Naive thymus-derived CD4-positive, alpha-beta T cell (primary cell): ENCODE measurements at regions of chr1 and their contacts with region 1.

Region 1: GRCh38 chr1:150621497-150622302 is 7.7 kb downstream of the ENSA start:
- DNase-seq: peak in 7 of 9 donors; percentile 53 to 74 (median 65)
- ATAC-seq: peak; percentile 78
- H3K4me3 ChIP-seq: no peak overlapping the region
- H3K4me3 Mint-ChIP-seq: peak overlapping the region in 8 of 10 donors; percentile 16 to 64 (median 46)
- H3K27ac ChIP-seq: peak overlapping the region; percentile 49
- H3K27ac Mint-ChIP-seq: peak overlapping the region; percentile 48 to 91 (median 83)
- H3K4me1 ChIP-seq: peaks cover 5 to 32% of the 10 kb centered on the region in 2 donors
- H3K4me1 Mint-ChIP-seq: peaks cover 17 to 65% (median 51%) of the 10 kb centered on the region in 7 donors
- H3K27me3 ChIP-seq: no peaks in the 10 kb centered on the region
- H3K27me3 Mint-ChIP-seq: no peaks in the 10 kb centered on the region

Region 2: GRCh38 chr1:150572918-150573647 is 48.6 kb before region 1 on chr1:
- CTCF ChIA-PET with region 1: interaction called, 272 read pairs
- POLR2A ChIA-PET with region 1: interaction called, 254 read pairs
- intact Hi-C with region 1: loop called in 1 of 2 experiments (anchors 1 kb)
- DNase-seq: no peak
- ATAC-seq: peak; percentile 1
- H3K4me3 ChIP-seq: peak overlapping the region; percentile 56
- H3K4me3 Mint-ChIP-seq: peak overlapping the region; percentile 88 to 99 (median 94)
- H3K27ac ChIP-seq: peak overlapping the region; percentile 97
- H3K27ac Mint-ChIP-seq: peak overlapping the region; percentile 81 to 99 (median 97)
- H3K4me1 ChIP-seq: peaks cover 58 to 72% of the 10 kb centered on the region in 2 donors
- H3K4me1 Mint-ChIP-seq: peaks cover 40 to 75% (median 59%) of the 10 kb centered on the region in 7 donors
- H3K27me3 ChIP-seq: no peaks in the 10 kb centered on the region
- H3K27me3 Mint-ChIP-seq: peaks cover 0 to 5% (median 0%) of the 10 kb centered on the region in 5 donors

Region 3: GRCh38 chr1:150578965-150579798 is 42.5 kb before region 1 on chr1 and contains the start of gene MCL1:
- CTCF ChIA-PET with region 1: interaction called, 5 read pairs
- POLR2A ChIA-PET with region 1: interaction called, 92 read pairs
- intact Hi-C with region 1: loop called (anchors 1 to 2 kb)
- DNase-seq: peak; percentile 75 to 88 (median 83)
- ATAC-seq: peak; percentile 90
- H3K4me3 ChIP-seq: peak within 1 kb of the TSS; percentile 95
- H3K4me3 Mint-ChIP-seq: peak within 1 kb of the TSS; percentile 92 to 99 (median 95)
- H3K27ac ChIP-seq: peak within 1 kb of the TSS; percentile 97
- H3K27ac Mint-ChIP-seq: peak within 1 kb of the TSS; percentile 96 to 99 (median 98)
- H3K4me1 ChIP-seq: peaks cover 3 to 15% of the 10 kb centered on the region in 2 donors
- H3K4me1 Mint-ChIP-seq: peaks cover 25 to 39% (median 29%) of the 10 kb centered on the region in 7 donors
- H3K27me3 ChIP-seq: no peaks in the 10 kb centered on the region
- H3K27me3 Mint-ChIP-seq: peaks cover 0 to 7% (median 0%) of the 10 kb centered on the region in 5 donors
- total RNA-seq, gene MCL1: 302 to 1,400 (median 377) TPM

Region 4: DNA sequence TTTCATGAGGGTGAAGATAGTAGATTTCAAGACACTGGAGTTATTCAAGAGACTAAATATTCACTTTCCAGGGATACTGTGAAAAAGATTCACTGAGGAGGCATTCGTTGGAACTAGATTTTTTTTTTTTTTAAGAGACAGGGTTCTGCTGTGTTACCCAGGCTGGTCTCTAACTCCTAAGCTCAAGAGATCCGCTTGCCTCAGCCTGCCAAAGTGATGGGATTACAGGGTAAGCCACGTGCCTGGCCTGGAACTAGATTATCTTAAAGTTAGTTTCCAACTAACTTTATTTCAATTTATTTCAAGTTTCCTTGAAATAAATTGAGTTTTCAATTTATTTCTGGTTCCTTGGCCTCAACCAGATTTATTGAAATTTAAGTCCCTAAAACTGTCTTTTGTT is 18.0 kb before region 1 on chr1:
- CTCF ChIA-PET with region 1: interaction called, 5 read pairs
- POLR2A ChIA-PET with region 1: interaction called, 4 read pairs
- intact Hi-C with region 1: loop called in 1 of 2 experiments (anchors 2 kb)
- DNase-seq: no peak
- ATAC-seq: no peak
- H3K4me3 ChIP-seq: no peak overlapping the region
- H3K4me3 Mint-ChIP-seq: no peak overlapping the region
- H3K27ac ChIP-seq: no peak overlapping the region
- H3K27ac Mint-ChIP-seq: peak overlapping the region in 4 of 9 donors; percentile 10 to 82 (median 45)
- H3K4me1 ChIP-seq: no peaks in the 10 kb centered on the region
- H3K4me1 Mint-ChIP-seq: peaks cover 0 to 12% (median 6%) of the 10 kb centered on the region in 7 donors
- H3K27me3 ChIP-seq: no peaks in the 10 kb centered on the region
- H3K27me3 Mint-ChIP-seq: no peaks in the 10 kb centered on the region

Region 5: GRCh38 chr1:150661156-150661555 is 39.5 kb after region 1 on chr1:
- CTCF ChIA-PET with region 1: no interaction called
- POLR2A ChIA-PET with region 1: no interaction called
- intact Hi-C with region 1: no loop called
- DNase-seq: no peak
- ATAC-seq: no peak
- H3K4me3 ChIP-seq: no peak overlapping the region
- H3K4me3 Mint-ChIP-seq: no peak overlapping the region
- H3K27ac ChIP-seq: no peak overlapping the region
- H3K27ac Mint-ChIP-seq: no peak overlapping the region
- H3K4me1 ChIP-seq: no peaks in the 10 kb centered on the region
- H3K4me1 Mint-ChIP-seq: peaks cover 3 to 12% (median 7%) of the 10 kb centered on the region in 7 donors
- H3K27me3 ChIP-seq: no peaks in the 10 kb centered on the region
- H3K27me3 Mint-ChIP-seq: no peaks in the 10 kb centered on the region